Activated CD4-positive, alpha-beta memory T cell treated with anti-CD3 and anti-CD28 coated beads for 36 hours (primary cell): ENCODE measurements at regions of chr9 and their contacts with region 1.

Region 1: GRCh38 chr9:95494416-95495371 is 22.1 kb downstream of the PTCH1 start:
- DNase-seq: peak; percentile 91
- H3K4me3 Mint-ChIP-seq: peak overlapping the region; percentile 71
- H3K27ac Mint-ChIP-seq: peak overlapping the region; percentile 89
- H3K4me1 Mint-ChIP-seq: peaks cover 49% of the 10 kb centered on the region
- H3K27me3 Mint-ChIP-seq: peaks cover 4% of the 10 kb centered on the region

Region 2: DNA sequence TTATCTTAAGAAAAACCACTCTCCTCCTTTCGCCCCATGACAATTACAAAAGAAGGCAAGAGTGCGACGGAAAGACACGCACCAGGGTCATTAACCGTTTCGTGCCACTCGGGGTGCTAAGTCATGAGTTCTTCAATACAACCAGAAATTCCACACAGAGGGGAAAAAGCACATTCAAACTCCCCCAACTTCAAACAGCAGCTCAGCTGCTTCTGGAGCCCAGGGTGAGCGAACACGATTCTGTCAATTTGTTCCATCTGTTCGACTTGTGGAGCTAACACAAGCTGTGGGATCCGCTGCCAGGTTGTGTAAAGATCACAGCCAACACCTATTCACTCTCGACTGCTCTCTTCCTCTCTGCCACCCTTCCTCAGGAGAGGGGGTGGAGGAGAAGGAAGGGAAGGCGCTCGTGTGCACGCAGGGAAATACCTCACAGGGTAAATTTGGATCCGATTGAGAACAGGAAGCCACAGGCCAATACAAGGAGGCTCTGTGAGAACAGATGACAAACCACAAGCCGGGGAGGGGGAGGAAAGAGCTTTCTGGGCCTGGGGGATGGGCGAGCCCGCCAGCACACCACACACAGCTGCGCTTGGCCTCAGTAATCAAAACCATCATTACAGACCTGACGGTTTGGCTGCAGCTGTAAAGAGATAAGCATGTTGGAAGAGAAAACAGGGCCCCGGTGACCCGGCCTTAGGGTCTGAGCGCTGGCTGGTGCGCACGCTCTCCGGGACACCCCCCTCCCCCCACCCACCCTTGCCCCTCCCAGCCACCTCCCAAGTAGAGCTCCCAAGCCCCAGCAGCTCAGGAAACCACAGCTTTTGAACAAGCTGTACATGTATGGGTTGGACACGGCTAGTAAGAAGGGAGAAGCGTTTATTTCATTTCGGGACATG is 32.2 kb before region 1 on chr9:
- CTCF ChIA-PET with region 1: no interaction called
- POLR2A ChIA-PET with region 1: no interaction called
- intact Hi-C with region 1: loop called (anchors 2 kb)
- DNase-seq: peak; percentile 88
- H3K4me3 Mint-ChIP-seq: peak overlapping the region; percentile 75
- H3K27ac Mint-ChIP-seq: peak overlapping the region; percentile 69
- H3K4me1 Mint-ChIP-seq: peaks cover 24% of the 10 kb centered on the region
- H3K27me3 Mint-ChIP-seq: no peaks in the 10 kb centered on the region